Calu3 (cell line): ENCODE measurements at regions of chr17 and their contacts with region 1.

Region 1: DNA sequence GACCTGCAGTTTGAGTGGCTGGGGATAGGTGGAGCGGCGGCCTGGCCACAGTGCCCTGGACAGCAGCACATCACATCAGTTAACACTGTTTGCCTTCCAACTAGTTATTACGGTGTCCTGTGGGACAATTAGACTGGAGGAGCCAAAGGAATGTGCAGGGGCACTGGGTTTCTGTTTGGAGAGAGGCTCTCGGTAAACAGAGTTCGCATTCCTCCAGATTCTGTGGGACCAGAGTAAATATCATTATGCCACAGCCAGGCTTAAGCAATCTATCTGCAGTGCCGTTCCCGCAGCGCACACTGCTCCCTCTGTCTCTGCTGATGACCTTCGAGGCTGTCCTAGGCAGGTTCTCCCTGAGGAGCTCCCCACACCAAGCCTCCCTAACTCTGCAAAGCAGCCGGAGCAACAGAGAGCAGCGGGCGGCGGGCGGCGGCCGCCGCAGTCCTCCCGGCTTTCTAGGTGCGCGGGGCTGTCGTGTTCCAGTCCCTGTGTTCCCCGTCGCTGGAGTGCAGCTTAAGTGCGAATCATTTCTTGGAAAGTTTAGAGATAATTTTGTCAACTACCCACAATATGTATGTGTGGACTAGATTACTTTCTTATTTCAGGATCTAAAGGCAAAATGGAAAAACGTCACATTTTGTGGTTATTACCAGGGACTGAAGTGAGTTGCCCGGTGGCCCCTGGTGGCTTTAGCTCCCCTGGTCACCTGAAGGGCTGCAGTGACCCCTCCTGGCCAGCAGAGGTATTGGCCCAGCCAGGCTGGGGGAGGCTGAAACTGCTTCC is 43.2 kb downstream of the PGS1 start:
- DNase-seq: peak; percentile 86
- H3K4me3 Mint-ChIP-seq: no peak overlapping the region
- H3K27ac Mint-ChIP-seq: no peak overlapping the region
- H3K4me1 Mint-ChIP-seq: no peaks in the 10 kb centered on the region
- H3K27me3 Mint-ChIP-seq: no peaks in the 10 kb centered on the region
- CTCF ChIP-seq: peak; percentile 93

Region 2: DNA sequence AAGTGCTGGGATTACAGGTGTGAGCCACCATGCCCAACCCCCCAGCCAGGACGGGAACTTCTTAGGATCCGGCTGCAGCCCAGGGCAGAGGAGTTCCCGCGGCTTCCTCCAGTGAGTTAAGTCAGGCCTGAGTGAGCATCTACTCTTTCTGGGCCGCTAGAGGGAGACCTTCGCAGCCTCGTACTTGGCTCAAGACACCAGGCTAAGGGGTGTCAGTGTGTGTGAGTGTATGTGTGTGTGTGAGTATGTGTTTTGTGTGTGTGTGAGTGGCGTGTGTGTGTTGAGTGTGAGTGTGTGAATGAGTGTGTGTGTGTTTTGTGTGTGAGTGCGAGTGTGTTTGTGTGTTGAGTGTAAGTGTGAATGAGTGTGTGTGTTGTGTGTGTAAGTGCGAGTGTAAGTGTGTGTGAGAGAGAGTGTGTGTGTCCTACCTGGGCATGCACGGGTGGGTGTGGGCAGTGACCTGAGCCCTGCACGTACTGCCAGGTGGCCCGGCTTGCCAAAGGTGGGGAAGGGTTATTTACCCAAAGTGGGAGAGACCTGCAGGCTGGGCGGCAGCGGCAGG is 131.8 kb before region 1 on chr17:
- CTCF ChIA-PET with region 1: interaction called, 6 read pairs
- intact Hi-C with region 1: loop called (anchors 1 kb)
- DNase-seq: peak; percentile 78
- H3K4me3 Mint-ChIP-seq: no peak overlapping the region
- H3K27ac Mint-ChIP-seq: no peak overlapping the region
- H3K4me1 Mint-ChIP-seq: no peaks in the 10 kb centered on the region
- H3K27me3 Mint-ChIP-seq: no peaks in the 10 kb centered on the region
- CTCF ChIP-seq: peak; percentile 74